ENCODE measurements at regions of chr12 and their contacts with region 1.

Region 1: GRCh38 chr12:115511986-115512711 is 765.3 kb downstream of the MED13L start:
- DNase-seq: no peak
- ATAC-seq: no peak
- H3K4me3 ChIP-seq: no peak overlapping the region
- H3K27ac ChIP-seq: peak overlapping the region in 1 of 12 donors; percentile 20
- H3K4me1 ChIP-seq: peaks cover 0 to 15% (median 6%) of the 10 kb centered on the region in 12 donors
- H3K27me3 ChIP-seq: no peaks in the 10 kb centered on the region
- CTCF ChIP-seq: no peak
- POLR2A ChIP-seq: no peak

Region 2: DNA sequence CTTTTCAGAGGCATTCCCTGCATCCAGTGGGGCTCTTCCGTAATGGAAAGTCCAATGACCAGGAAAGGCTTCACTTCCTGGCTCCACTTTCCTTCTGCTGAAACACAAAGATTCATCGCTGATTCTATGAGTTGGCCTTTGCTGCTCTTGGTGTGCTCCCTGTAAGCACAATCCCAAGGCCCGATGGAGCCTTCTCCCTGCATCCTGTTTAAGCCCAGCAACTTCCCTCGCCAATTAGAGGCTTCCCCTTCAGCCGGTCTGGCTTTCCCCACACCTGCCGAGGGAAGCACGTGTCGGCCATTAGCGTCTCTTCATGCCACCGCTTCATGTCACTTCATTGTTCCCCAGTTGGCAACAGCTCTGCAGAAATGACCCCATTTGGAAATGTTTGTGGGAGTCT is 71.4 kb after region 1 on chr12:
- intact Hi-C with region 1: loop called in 1 of 10 experiments (anchors 5 kb)
- DNase-seq: no peak
- ATAC-seq: peak in 1 of 4 donors; percentile 42
- H3K4me3 ChIP-seq: no peak overlapping the region
- H3K27ac ChIP-seq: no peak overlapping the region
- H3K4me1 ChIP-seq: peaks cover 0 to 13% (median 0%) of the 10 kb centered on the region in 12 donors
- H3K27me3 ChIP-seq: peaks cover 0 to 3% (median 0%) of the 10 kb centered on the region in 9 donors
- CTCF ChIP-seq: no peak
- POLR2A ChIP-seq: no peak

Region 3: DNA sequence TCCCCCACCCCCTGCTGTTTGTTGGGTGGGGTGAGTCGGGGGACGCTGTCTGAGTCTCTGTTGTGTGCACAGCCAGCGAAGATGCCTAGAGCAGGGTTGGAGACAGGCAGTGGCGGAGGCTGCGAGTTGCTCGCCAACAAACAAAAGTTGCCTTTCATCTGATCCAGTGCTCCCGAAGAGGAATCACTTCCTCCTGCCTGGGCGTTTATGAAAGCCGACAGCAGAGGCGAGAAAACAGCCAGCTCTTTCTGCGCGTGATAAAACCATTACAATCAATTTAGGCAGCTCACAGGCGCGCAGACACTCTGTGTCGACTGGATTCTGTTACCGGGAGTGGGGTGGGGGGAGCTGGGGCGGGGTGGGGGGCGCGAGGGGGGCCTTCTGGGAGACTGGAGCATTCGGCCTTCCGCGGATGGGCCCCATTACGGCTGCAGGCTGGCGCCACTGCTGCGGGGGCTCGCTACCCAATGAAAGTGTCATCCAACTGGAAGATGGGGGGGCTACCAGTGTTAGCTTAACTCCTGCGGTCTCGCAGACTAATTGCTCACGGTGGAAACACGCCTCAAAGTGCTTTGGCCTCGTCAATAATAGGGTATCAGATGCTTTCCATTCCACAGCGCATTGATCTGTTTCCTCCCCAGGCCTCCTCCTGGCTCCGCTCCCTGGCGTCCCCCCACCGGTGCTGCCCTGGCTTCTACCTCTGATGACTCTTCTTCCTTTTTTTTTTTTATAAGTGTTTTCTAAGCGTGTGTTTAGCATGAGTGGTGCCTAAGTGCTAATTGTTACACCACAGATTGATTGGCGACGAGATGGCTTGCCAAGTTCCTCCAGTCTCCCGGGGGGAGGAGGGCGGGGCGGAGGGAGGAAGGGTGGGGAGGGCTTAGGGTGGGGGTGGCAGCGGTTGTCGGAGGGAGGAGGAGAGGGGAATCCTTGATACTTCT is 87.0 kb after region 1 on chr12:
- intact Hi-C with region 1: loop called in 4 of 10 experiments (anchors 2 to 10 kb)
- DNase-seq: peak; percentile 36 to 67 (median 63)
- ATAC-seq: peak; percentile 42 to 88 (median 60)
- H3K4me3 ChIP-seq: peak overlapping the region in 6 of 12 donors; percentile 10 to 32 (median 26)
- H3K27ac ChIP-seq: peak overlapping the region in 10 of 12 donors; percentile 26 to 68 (median 48)
- H3K4me1 ChIP-seq: peaks cover 0 to 18% (median 7%) of the 10 kb centered on the region in 12 donors
- H3K27me3 ChIP-seq: peaks cover 0 to 25% (median 4%) of the 10 kb centered on the region in 9 donors
- CTCF ChIP-seq: no peak
- POLR2A ChIP-seq: no peak